CD4-positive, alpha-beta memory T cell (primary cell): ENCODE measurements at regions of chr14 and their contacts with region 1.

Region 1: GRCh38 chr14:49892636-49893308 is at the start of gene ARF6:
- DNase-seq: peak; percentile 92 to 94 (median 92)
- H3K4me3 ChIP-seq: peak within 1 kb of the TSS; percentile 75 to 100
- H3K4me3 Mint-ChIP-seq: peak within 1 kb of the TSS; percentile 95 to 99 (median 98)
- H3K27ac ChIP-seq: peak within 1 kb of the TSS; percentile 98
- H3K27ac Mint-ChIP-seq: peak within 1 kb of the TSS; percentile 93 to 100 (median 99)
- H3K4me1 ChIP-seq: peaks cover 35% of the 10 kb centered on the region
- H3K4me1 Mint-ChIP-seq: peaks cover 13 to 45% (median 22%) of the 10 kb centered on the region in 4 donors
- H3K27me3 ChIP-seq: no peaks in the 10 kb centered on the region
- H3K27me3 Mint-ChIP-seq: no peaks in the 10 kb centered on the region
- total RNA-seq, gene ARF6: 116 to 124 TPM

Region 2: GRCh38 chr14:49940808-49941421 is 48.1 kb after region 1 on chr14:
- CTCF ChIA-PET with region 1: interaction called, 3 read pairs
- POLR2A ChIA-PET with region 1: interaction called, 31 read pairs
- intact Hi-C with region 1: loop called (anchors 1 kb)
- DNase-seq: peak in 4 of 5 donors; percentile 40 to 56 (median 48)
- H3K4me3 ChIP-seq: peak overlapping the region in 1 of 2 donors; percentile 15
- H3K4me3 Mint-ChIP-seq: peak overlapping the region; percentile 60 to 86 (median 68)
- H3K27ac ChIP-seq: peak overlapping the region; percentile 23
- H3K27ac Mint-ChIP-seq: peak overlapping the region; percentile 31 to 93 (median 88)
- H3K4me1 ChIP-seq: peaks cover 52% of the 10 kb centered on the region
- H3K4me1 Mint-ChIP-seq: peaks cover 44 to 72% (median 61%) of the 10 kb centered on the region in 4 donors
- H3K27me3 ChIP-seq: no peaks in the 10 kb centered on the region
- H3K27me3 Mint-ChIP-seq: no peaks in the 10 kb centered on the region

Region 3: GRCh38 chr14:49977126-49977841 is 84.5 kb after region 1 on chr14:
- CTCF ChIA-PET with region 1: interaction called, 5 read pairs
- POLR2A ChIA-PET with region 1: interaction called, 84 read pairs
- intact Hi-C with region 1: no loop called
- DNase-seq: peak; percentile 48 to 66 (median 61)
- H3K4me3 ChIP-seq: peak overlapping the region; percentile 50 to 53
- H3K4me3 Mint-ChIP-seq: peak overlapping the region; percentile 75 to 89 (median 84)
- H3K27ac ChIP-seq: peak overlapping the region; percentile 48
- H3K27ac Mint-ChIP-seq: peak overlapping the region; percentile 91 to 95 (median 93)
- H3K4me1 ChIP-seq: peaks cover 100% of the 10 kb centered on the region
- H3K4me1 Mint-ChIP-seq: peaks cover 60 to 96% (median 87%) of the 10 kb centered on the region in 4 donors
- H3K27me3 ChIP-seq: no peaks in the 10 kb centered on the region
- H3K27me3 Mint-ChIP-seq: no peaks in the 10 kb centered on the region

Region 4: GRCh38 chr14:50099335-50099734 is 206.6 kb after region 1 on chr14:
- CTCF ChIA-PET with region 1: interaction called, 5 read pairs
- POLR2A ChIA-PET with region 1: interaction called, 11 read pairs
- intact Hi-C with region 1: no loop called
- DNase-seq: peak in 1 of 5 donors; percentile 25
- H3K4me3 ChIP-seq: no peak overlapping the region
- H3K4me3 Mint-ChIP-seq: peak overlapping the region in 5 of 8 donors; percentile 7 to 38 (median 28)
- H3K27ac ChIP-seq: no peak overlapping the region
- H3K27ac Mint-ChIP-seq: peak overlapping the region; percentile 10 to 92 (median 80)
- H3K4me1 ChIP-seq: peaks cover 69% of the 10 kb centered on the region
- H3K4me1 Mint-ChIP-seq: peaks cover 41 to 68% (median 54%) of the 10 kb centered on the region in 4 donors
- H3K27me3 ChIP-seq: no peaks in the 10 kb centered on the region
- H3K27me3 Mint-ChIP-seq: no peaks in the 10 kb centered on the region